Aorta (tissue), 5 donors: ENCODE measurements at regions of chr11 and their contacts with region 1.

Region 1: GRCh38 chr11:19553683-19554333 is 158.8 kb upstream of the NAV2 start:
- DNase-seq: peak; percentile 87 to 95
- ATAC-seq: peak; percentile 85
- H3K4me3 ChIP-seq: no peak overlapping the region
- H3K27ac ChIP-seq: no peak overlapping the region
- H3K4me1 ChIP-seq: no peaks in the 10 kb centered on the region
- H3K27me3 ChIP-seq: no peaks in the 10 kb centered on the region

Region 2: GRCh38 chr11:18540207-18541009 is 1013.4 kb before region 1 on chr11:
- intact Hi-C with region 1: no loop called
- DNase-seq: no peak
- ATAC-seq: no peak
- H3K4me3 ChIP-seq: no peak overlapping the region
- H3K27ac ChIP-seq: no peak overlapping the region
- H3K4me1 ChIP-seq: no peaks in the 10 kb centered on the region
- H3K27me3 ChIP-seq: no peaks in the 10 kb centered on the region

Region 3: DNA sequence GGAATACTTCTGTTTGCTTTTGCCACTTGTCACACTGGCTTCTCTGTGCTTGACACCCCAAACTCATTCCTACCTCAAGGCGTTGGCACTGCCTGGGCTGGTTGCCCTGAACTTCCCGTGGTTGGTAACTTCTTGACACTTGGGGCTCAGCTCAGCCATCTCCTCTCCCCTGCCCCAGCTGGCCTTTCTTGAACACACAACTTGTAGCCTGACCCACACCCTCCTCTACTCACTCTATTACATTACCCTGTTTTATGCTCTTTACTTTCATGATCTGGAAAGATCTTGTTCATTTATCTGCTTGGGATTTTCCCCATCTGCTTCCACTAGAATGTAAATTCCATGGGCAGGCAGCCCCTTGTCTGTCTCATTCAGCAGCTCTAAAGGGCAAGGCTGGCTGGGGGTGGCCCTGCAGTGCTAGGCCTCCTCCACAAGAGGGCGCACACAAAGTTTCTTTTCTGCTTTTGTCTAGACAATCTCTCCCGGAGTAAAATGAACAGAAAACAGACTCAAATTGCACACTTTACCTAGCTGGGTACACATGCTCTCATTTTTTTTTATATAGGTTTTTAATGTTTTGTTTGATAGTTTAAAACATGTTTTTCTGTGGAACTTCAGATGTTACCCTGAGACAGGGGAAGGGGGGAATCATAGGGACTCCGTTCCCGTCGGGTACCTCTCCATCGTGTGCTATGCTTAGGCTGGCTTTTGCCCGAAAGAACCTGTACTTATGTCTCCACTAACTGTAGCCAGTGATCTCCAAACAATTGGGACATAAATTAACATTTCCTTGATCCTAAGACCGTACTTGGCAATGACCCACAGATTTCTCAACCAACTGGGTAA is 476.8 kb before region 1 on chr11:
- intact Hi-C with region 1: loop called (anchors 5 kb)
- DNase-seq: peak in 1 of 2 donors; percentile 83
- ATAC-seq: no peak
- H3K4me3 ChIP-seq: no peak overlapping the region
- H3K27ac ChIP-seq: no peak overlapping the region
- H3K4me1 ChIP-seq: no peaks in the 10 kb centered on the region
- H3K27me3 ChIP-seq: peaks cover 0 to 3% of the 10 kb centered on the region in 2 donors

Region 4: DNA sequence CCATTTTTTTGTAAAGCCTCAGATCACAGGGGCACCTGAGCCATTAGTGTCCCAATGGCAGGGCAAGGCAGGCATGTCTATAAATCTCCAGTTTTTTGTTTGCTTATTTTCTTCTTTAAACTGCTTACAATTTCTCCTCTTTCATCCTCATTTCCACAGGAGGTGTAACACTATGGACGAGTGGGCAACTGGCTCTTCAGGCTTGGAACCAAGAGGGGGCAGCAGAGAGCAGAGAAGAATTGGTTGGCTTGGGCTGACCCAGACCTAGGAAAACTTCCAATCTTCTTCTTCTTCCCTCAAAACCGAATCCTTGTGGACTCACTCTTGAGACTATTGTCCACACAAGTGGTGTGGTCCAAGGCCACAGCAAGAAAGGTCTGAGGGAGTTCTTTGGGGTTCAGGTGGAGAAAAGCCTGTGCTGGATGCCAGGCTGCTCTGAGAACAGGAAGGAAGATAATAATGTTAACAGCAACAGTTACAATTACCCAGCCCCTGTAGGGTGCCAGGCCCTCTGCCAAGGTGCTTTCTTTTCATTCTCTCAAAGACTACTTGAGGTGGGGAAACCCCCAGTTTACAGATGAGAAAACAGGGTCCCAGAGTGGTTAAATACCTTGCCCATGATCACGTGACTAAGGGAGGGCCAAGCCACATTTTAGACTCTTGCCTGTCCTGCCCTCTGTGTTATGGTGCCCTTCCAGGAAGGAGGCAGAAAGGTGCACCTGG is 242.3 kb before region 1 on chr11:
- intact Hi-C with region 1: loop called (anchors 1 kb)
- DNase-seq: peak; percentile 69 to 84
- ATAC-seq: peak; percentile 88
- H3K4me3 ChIP-seq: no peak overlapping the region
- H3K27ac ChIP-seq: no peak overlapping the region
- H3K4me1 ChIP-seq: peaks cover 0 to 2% of the 10 kb centered on the region in 2 donors
- H3K27me3 ChIP-seq: no peaks in the 10 kb centered on the region

Region 5: DNA sequence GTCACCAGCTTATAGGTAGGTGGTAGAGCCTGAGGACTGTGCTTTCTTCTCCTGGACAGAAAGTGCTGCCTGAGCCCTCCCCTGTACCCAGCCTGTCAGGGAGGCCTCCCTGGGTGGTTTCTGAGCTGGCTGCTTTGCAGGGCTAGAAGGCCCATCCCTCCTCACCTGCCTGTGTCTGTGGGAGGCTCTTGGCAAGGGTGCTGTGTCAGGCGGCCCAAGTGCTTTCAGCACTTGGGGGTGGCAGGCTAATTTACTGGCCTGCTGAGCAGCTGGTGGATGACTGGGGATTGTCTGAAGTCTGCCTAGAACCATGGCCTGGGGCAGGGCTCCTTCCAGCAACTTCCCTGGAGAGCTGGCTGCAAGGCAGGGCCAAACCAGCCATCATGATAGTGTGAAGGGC is 19.9 kb after region 1 on chr11:
- intact Hi-C with region 1: no loop called
- DNase-seq: no peak
- ATAC-seq: no peak
- H3K4me3 ChIP-seq: no peak overlapping the region
- H3K27ac ChIP-seq: no peak overlapping the region
- H3K4me1 ChIP-seq: peaks cover 13% of the 10 kb centered on the region in 2 donors
- H3K27me3 ChIP-seq: no peaks in the 10 kb centered on the region

Region 6: DNA sequence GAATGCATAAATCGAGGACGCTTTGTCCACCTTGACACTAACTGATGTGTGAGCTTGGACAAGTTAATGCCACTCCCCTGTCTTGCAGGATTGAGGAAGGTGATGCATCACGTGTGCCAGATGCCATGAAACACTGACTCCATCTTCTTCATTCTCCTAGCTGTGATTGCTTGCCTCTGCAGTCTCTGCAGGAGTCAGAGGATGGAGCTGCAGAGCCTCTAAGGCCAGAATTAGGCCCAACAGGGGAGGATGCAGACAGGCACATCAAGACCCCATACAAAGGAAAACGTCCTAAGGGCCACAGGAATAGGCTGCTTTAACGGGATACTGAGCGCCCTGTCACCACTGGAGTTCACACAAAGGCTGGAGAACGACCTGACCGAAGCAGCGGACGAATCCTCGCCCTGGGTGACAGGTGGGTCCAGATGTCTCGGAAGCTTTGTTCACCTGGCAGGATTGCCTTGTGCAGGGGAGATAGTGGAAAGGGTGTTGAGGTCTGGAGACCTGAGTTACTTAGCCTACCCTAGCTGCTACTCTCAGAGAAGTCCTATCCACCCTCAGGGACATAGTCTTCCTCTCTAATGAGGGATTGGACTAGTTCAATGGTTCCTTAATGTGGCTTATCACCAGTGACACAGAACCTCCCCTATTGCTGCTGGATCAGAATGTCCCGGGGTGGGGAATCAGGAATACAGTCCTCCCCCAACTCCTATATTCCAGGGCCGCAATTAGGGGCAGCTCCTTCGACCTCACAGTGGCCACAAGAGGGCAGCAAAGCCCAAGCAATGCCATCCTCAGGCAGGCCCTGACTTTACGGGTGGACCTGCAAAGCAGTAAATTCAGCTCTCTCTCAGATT is 574.1 kb after region 1 on chr11:
- intact Hi-C with region 1: loop called in 1 of 2 experiments (anchors 5 kb)
- DNase-seq: peak; percentile 86 to 92
- ATAC-seq: peak; percentile 81
- H3K4me3 ChIP-seq: no peak overlapping the region
- H3K27ac ChIP-seq: peak overlapping the region in 1 of 2 donors; percentile 13
- H3K4me1 ChIP-seq: no peaks in the 10 kb centered on the region
- H3K27me3 ChIP-seq: no peaks in the 10 kb centered on the region